ENCODE measurements at regions of chr15 and their contacts with region 1.

Region 1: DNA sequence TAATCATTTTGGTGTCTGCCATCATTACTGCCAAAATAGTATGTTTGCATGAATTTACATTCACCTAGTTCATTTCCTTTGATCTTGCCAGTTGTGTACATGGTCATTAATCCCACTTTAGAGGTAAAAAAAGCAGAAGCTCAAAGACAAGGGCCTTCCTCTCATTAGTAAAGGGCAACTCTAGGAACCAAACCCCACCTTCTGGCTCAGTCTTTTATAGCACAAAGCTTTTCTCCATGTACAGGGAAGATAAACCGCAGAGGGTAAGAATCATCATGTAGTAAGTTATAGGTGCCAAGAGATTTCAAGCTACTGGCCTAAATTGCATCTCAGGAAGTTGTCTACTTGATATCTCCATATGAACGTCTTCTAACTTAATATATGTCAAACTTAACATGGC is 19.3 kb upstream of the SPG21 start:
- DNase-seq: no peak
- H3K4me3 ChIP-seq: no peak overlapping the region
- H3K27ac ChIP-seq: no peak overlapping the region
- H3K27me3 ChIP-seq: no peaks in the 10 kb centered on the region
- CTCF ChIP-seq: peak; percentile 33

Region 2: DNA sequence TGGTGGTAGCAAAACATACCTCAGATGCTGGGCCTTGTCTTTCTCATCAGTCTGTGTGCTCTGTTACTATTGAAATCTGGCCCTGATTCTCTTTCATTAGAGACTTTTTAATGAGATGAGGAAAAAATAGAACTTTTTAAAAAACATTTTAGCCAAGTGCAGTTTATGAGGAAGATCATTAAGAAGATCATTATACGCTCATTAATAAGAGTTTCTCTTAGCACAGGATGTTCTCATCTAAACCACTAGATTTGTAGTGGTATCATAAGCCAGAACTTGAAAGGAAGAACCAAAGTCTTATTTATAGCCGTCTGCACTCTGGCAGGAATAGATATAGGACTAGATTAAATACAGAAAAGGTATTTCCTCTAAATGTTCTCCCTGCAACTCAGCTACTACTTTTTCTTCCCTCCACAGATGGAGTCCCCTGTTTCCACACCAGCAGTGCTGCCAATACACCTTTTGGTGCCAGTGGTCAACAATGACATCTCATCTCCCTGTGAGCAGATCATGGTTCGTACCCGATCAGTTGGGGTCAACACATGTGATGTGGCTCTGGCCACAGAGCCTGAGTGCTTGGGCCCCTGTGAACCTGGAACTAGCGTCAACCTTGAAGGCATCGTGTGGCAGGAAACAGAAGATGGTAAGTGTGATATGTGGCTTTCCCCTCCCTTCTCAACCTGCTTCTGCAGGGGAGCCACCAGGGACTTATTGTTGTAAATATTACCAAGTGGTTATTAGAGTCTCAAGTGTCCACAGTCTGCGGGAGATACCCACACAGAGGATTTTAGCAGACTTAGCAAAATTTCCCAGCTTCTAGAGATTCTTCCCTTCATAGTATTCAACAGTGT is 386.3 kb before region 1 on chr15:
- CTCF ChIA-PET with region 1: no interaction called
- POLR2A ChIA-PET with region 1: no interaction called
- DNase-seq: no peak
- H3K4me3 ChIP-seq: no peak overlapping the region
- H3K27ac ChIP-seq: no peak overlapping the region
- H3K27me3 ChIP-seq: no peaks in the 10 kb centered on the region
- CTCF ChIP-seq: no peak

Region 3: GRCh38 chr15:64991536-64992135 is 17.3 kb before region 1 on chr15:
- CTCF ChIA-PET with region 1: interaction called, 3 read pairs
- POLR2A ChIA-PET with region 1: interaction called, 10 read pairs
- DNase-seq: peak; percentile 75
- H3K4me3 ChIP-seq: no peak overlapping the region
- H3K27ac ChIP-seq: no peak overlapping the region
- H3K27me3 ChIP-seq: peaks cover 3% of the 10 kb centered on the region
- CTCF ChIP-seq: no peak

Measured in AG04450 (cell line).